Aorta (tissue), 5 donors: ENCODE measurements at regions of chrX and their contacts with region 1.

Region 1: DNA sequence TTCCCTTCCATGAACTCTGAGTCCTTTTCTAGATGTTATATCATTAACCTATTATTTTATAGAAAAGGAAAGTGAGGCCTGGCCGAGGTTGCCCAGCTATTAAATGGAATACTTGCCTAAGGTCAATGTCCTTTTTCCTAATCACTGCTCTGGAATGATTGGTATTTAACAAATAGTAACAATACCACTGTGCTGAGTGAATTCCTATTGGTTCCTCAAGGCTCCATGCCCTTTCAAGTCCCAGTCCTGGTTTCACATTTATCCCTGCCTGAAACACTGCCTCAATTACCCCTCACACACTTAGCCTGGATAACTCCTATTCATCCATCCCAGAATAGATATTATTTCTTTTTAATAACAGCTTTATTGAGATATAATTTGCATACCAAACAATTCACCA is 6.2 kb downstream of the TCEAL9 start:
- DNase-seq: no peak
- ATAC-seq: no peak
- H3K4me3 ChIP-seq: no peak overlapping the region
- H3K27ac ChIP-seq: no peak overlapping the region
- H3K4me1 ChIP-seq: no peaks in the 10 kb centered on the region
- H3K27me3 ChIP-seq: no peaks in the 10 kb centered on the region

Region 2: GRCh38 chrX:103017542-103017941 is 345.0 kb before region 1 on chrX:
- intact Hi-C with region 1: no loop called
- DNase-seq: no peak
- ATAC-seq: no peak
- H3K4me3 ChIP-seq: no peak overlapping the region
- H3K27ac ChIP-seq: no peak overlapping the region
- H3K4me1 ChIP-seq: no peaks in the 10 kb centered on the region
- H3K27me3 ChIP-seq: no peaks in the 10 kb centered on the region

Region 3: GRCh38 chrX:103157496-103158320 is 204.8 kb before region 1 on chrX:
- intact Hi-C with region 1: no loop called
- DNase-seq: no peak
- ATAC-seq: no peak
- H3K4me3 ChIP-seq: no peak overlapping the region
- H3K27ac ChIP-seq: no peak overlapping the region
- H3K4me1 ChIP-seq: no peaks in the 10 kb centered on the region
- H3K27me3 ChIP-seq: no peaks in the 10 kb centered on the region

Region 4: GRCh38 chrX:103404231-103405208 is 42.0 kb after region 1 on chrX:
- intact Hi-C with region 1: loop called in 1 of 2 experiments (anchors 5 kb)
- DNase-seq: peak; percentile 77 to 82
- ATAC-seq: peak; percentile 83
- H3K4me3 ChIP-seq: peak overlapping the region; percentile 43 to 82
- H3K27ac ChIP-seq: peak overlapping the region in 1 of 2 donors; percentile 91
- H3K4me1 ChIP-seq: no peaks in the 10 kb centered on the region
- H3K27me3 ChIP-seq: no peaks in the 10 kb centered on the region